ENCODE measurements at regions of chr12 and their contacts with region 1.

Region 1: DNA sequence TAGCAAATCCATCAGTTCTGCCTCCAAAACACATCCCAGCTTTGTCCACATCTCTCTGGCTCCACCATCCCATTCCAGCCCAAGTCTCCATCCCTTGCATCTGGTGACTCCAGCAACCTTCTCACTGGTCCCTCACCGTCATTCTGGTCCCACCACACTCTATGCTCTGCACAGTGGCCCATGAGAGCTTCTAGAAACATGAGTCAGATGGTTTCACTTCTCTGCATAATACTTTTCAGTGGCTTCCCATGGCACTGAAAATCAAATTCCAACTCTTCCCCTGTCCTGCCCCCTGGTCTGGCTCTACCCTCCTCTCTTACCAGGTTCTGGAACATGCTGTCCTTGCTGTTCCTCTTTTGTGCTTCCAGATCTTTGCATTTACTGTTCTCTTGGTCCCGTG is 17.2 kb upstream of the C12orf76 start:
- DNase-seq: no peak
- H3K4me3 Mint-ChIP-seq: no peak overlapping the region
- H3K27ac Mint-ChIP-seq: peak overlapping the region; percentile 24
- H3K4me1 Mint-ChIP-seq: peaks cover 33% of the 10 kb centered on the region
- H3K27me3 Mint-ChIP-seq: peaks cover 2% of the 10 kb centered on the region

Region 2: DNA sequence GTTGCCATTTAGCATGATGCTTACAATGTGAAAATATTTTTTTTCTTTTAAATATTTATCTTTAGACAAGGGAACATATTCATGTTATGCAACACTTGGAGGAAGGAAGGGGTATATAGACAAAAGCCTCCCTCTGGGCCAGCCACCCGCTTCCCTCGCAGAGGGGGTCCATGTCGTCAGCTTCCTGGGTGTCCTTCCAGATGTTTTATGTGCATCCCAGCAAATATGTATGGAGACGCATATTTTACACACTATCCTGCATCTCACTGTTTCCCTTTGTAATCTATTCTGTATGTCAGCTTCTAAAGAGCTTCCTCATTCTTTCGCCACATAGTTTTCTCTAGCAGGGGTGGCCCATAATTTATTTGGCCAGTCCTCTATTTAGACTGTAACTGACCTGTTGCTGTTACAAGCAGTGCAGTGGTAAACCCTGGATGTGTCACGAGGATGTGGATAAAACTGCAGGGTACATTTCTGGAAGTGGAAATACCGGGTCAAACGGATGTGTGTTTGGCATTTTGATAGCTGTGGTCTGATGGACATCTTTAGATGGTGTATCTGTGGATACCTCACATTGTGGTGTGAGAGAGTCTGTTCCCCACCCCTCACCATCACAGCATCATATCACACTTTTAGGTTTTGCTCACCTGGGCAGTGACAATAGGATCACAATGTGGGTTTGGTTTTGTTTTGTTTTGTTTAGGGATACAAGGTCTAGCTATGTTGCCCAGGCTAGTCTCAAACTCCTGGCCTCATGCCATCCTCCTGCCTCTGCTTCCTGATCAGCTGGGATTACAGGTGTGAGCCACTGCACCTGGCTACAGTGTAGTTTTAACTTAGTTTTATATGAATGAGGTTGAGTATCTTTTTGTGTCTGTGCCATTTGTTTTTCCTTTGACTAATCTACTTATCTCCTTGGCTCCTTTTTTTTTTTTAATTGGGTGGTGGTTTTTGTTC is 320.3 kb before region 1 on chr12:
- intact Hi-C with region 1: no loop called
- DNase-seq: no peak
- H3K4me3 Mint-ChIP-seq: no peak overlapping the region
- H3K27ac Mint-ChIP-seq: no peak overlapping the region
- H3K4me1 Mint-ChIP-seq: no peaks in the 10 kb centered on the region
- H3K27me3 Mint-ChIP-seq: peaks cover 10% of the 10 kb centered on the region

Region 3: GRCh38 chr12:110039085-110039807 is 26.3 kb before region 1 on chr12:
- intact Hi-C with region 1: loop called (anchors 2 kb)
- DNase-seq: peak; percentile 34
- H3K4me3 Mint-ChIP-seq: peak overlapping the region; percentile 50
- H3K27ac Mint-ChIP-seq: peak overlapping the region; percentile 94
- H3K4me1 Mint-ChIP-seq: peaks cover 63% of the 10 kb centered on the region
- H3K27me3 Mint-ChIP-seq: no peaks in the 10 kb centered on the region

Region 4: DNA sequence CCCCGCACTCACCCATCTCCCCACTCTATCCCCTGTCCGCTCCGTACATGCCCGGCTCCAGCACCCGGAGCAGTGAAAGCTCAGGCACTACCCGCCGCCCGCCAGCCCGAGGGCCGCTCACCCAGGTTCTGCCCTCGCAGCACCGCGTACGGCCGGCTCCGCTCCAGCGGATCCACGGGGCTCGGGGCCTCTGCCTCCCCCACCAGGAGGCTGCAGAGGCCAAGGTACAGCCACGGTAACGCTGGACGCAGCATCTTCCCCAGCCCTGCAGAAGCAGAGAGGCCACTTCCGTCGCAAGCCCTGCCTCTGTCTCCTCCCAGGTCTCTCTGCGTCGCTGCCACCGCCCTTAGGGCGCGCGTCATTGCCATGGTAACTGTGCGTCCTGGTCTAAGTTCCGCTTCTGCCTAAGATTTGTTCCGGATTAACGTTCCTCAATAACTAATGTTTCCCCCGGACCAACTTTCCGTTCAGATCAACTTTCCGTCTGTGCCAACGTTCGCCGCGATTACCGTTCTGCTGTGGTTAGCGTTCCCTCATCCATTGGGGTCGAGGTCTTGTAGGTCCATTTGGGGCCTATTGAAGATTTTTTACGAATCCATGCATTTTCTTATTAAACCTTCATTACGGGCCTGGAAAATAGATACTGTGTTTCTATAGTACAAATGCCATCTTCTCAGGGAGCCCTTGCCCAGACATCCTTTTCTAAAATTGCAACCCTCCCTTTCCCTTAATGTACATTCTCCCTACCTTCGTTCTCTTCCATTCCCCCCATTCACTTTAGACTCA is 17.1 kb before region 1 on chr12 and contains the start of gene C12orf76:
- intact Hi-C with region 1: loop called (anchors 1 kb)
- DNase-seq: peak; percentile 89
- H3K4me3 Mint-ChIP-seq: peak within 1 kb of the TSS; percentile 84
- H3K27ac Mint-ChIP-seq: peak within 1 kb of the TSS; percentile 91
- H3K4me1 Mint-ChIP-seq: peaks cover 34% of the 10 kb centered on the region
- H3K27me3 Mint-ChIP-seq: no peaks in the 10 kb centered on the region
- total RNA-seq, gene C12orf76: 20.3 and 20.8 TPM in 2 replicates

Measured in activated T-helper 1 cell treated with anti-CD3 and anti-CD28 coated beads, Interleukin-12 subunit alpha, Interleukin-12 subunit beta, Interleukin-2, Interleukin-4 antibody, amounts not matched to agents 30 ng/mL and 10 ng/mL and 1 ng/mL, durations not matched to agents 14 hours and 24 hours and 36 hours (primary cell).